H1 (cell line): ENCODE measurements at regions of chr5 and their contacts with region 1.

Region 1: GRCh38 chr5:168747987-168748777 is 169.0 kb upstream of the PANK3 start:
- DNase-seq: peak; percentile 68 to 91
- H3K4me3 ChIP-seq: no peak overlapping the region
- H3K27ac ChIP-seq: no peak overlapping the region
- H3K4me1 ChIP-seq: no peaks in the 10 kb centered on the region
- H3K27me3 ChIP-seq: peaks cover 0 to 3% (median 0%) of the 10 kb centered on the region in 4 experiments; a peak in 1 of 7 replicates
- CTCF ChIP-seq: peak; percentile 95
- EP300 ChIP-seq: no peak
- POLR2A ChIP-seq: no peak
- RAD21 ChIP-seq: peak; percentile 86 to 90

Region 2: GRCh38 chr5:168712280-168712924 is 35.8 kb before region 1 on chr5:
- CTCF ChIA-PET with region 1: interaction called, 10 read pairs
- POLR2A ChIA-PET with region 1: no interaction called
- DNase-seq: peak in 1 of 2 experiments; percentile 1
- H3K4me3 ChIP-seq: no peak overlapping the region
- H3K27ac ChIP-seq: no peak overlapping the region
- H3K4me1 ChIP-seq: no peaks in the 10 kb centered on the region; a peak in 1 of 7 replicates
- H3K27me3 ChIP-seq: no peaks in the 10 kb centered on the region; a peak in 1 of 7 replicates
- CTCF ChIP-seq: no peak
- EP300 ChIP-seq: no peak
- POLR2A ChIP-seq: no peak
- RAD21 ChIP-seq: no peak

Region 3: DNA sequence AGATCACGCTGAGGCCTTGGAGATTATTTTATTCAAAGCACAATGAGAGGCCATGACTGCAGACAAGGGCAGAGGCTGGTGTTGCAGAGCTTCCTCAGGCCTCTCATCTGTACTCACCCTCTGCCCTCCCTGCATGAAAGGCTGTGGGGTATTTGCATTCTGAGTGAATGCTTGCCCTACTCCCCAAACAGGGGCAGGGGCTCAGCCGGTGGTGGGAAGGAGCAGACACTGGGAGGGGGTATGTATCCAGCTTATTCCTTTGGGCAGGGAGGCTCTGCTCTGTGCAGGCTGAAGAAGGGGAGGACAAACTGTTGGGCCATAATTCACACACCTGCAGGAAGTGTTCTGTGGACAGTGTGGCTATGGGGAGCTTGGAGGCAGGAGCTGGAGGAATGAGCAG is 20.6 kb before region 1 on chr5:
- CTCF ChIA-PET with region 1: interaction called, 11 read pairs
- POLR2A ChIA-PET with region 1: no interaction called
- DNase-seq: no peak
- H3K4me3 ChIP-seq: no peak overlapping the region
- H3K27ac ChIP-seq: no peak overlapping the region
- H3K4me1 ChIP-seq: peaks cover 0 to 7% (median 3%) of the 10 kb centered on the region in 4 experiments; a peak in 4 of 7 replicates
- H3K27me3 ChIP-seq: no peaks in the 10 kb centered on the region
- CTCF ChIP-seq: no peak
- EP300 ChIP-seq: no peak
- POLR2A ChIP-seq: no peak
- RAD21 ChIP-seq: no peak

Region 4: DNA sequence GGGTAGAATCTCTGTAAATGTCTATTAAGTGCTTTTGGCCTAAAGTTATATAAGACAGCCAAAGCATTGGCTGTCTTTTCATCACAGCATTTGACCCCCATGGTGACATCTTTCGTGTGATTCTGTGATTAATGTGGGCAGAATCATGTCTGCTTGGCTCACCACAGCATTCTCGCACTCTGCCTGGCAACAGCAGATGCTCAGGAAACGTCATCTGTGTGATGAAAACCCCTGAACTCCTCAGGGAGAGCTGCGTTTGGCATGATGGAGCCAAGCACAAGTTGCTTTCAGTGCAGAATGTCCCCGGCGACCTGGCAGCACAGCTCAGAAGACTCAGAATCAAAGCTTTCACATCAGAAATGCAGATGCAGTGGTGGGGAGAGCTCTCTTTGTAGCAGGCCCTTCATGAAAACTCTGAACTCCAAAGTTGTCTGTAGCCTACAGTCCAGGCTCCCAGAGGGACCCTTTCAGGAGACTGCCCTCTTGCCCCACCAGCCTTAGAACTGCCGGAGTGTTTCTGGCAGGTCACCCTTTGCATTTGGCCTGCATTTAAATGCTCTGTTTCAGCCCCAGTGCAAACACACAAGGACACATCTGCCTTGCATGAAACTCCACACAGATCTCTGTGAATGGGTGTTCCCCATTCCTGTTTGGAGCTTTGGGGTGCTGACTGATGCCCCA is 13.4 kb before region 1 on chr5:
- CTCF ChIA-PET with region 1: interaction called, 12 read pairs
- POLR2A ChIA-PET with region 1: no interaction called
- DNase-seq: no peak
- H3K4me3 ChIP-seq: no peak overlapping the region
- H3K27ac ChIP-seq: no peak overlapping the region
- H3K4me1 ChIP-seq: no peaks in the 10 kb centered on the region; a peak in 1 of 7 replicates
- H3K27me3 ChIP-seq: no peaks in the 10 kb centered on the region
- CTCF ChIP-seq: no peak
- EP300 ChIP-seq: no peak
- POLR2A ChIP-seq: no peak
- RAD21 ChIP-seq: no peak

Region 5: GRCh38 chr5:168765551-168766425 is 17.6 kb after region 1 on chr5:
- CTCF ChIA-PET with region 1: interaction called, 10 read pairs
- POLR2A ChIA-PET with region 1: interaction called, 3 read pairs
- DNase-seq: no peak
- H3K4me3 ChIP-seq: no peak overlapping the region
- H3K27ac ChIP-seq: no peak overlapping the region
- H3K4me1 ChIP-seq: no peaks in the 10 kb centered on the region
- H3K27me3 ChIP-seq: no peaks in the 10 kb centered on the region
- CTCF ChIP-seq: no peak
- EP300 ChIP-seq: no peak
- POLR2A ChIP-seq: no peak
- RAD21 ChIP-seq: no peak

Region 6: DNA sequence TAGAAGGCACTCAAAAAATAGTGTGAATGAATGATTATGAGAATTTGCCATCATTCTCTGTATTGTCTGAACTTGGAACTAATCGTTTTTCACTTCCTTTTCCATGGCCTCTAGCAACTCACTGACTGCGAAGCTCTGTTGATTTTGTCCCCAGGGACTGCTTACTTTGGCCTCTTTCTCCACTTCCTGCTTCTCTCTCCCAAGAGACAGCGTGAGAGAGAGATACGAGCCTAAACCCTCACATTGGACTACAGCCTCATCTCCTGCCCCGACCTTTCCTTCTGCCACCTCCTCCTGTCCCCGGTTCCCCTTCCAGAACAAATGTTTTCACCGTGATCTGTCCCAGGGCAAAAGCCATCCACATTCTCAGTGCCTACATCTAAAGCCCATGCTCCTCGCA is 131.7 kb after region 1 on chr5:
- CTCF ChIA-PET with region 1: interaction called, 14 read pairs
- POLR2A ChIA-PET with region 1: no interaction called
- DNase-seq: no peak
- H3K4me3 ChIP-seq: no peak overlapping the region
- H3K27ac ChIP-seq: no peak overlapping the region
- H3K4me1 ChIP-seq: peaks cover 3 to 16% (median 7%) of the 10 kb centered on the region in 4 experiments
- H3K27me3 ChIP-seq: peaks cover 0 to 7% (median 4%) of the 10 kb centered on the region in 4 experiments; a peak in 4 of 7 replicates
- CTCF ChIP-seq: no peak
- EP300 ChIP-seq: no peak
- POLR2A ChIP-seq: no peak
- RAD21 ChIP-seq: no peak